ENCODE measurements at regions of chr2 and their contacts with region 1.

Region 1: GRCh38 chr2:216519154-216519762 is 20.6 kb downstream of the RPL37A start:
- DNase-seq: peak; percentile 64
- H3K4me3 ChIP-seq: no peak overlapping the region; a peak in 1 of 4 replicates
- H3K27ac ChIP-seq: no peak overlapping the region
- H3K4me1 ChIP-seq: peaks cover 0 to 5% of the 10 kb centered on the region in 2 experiments; a peak in 2 of 4 replicates
- H3K27me3 ChIP-seq: no peaks in the 10 kb centered on the region
- CTCF ChIP-seq: peak; percentile 85
- EP300 ChIP-seq: no peak
- RAD21 ChIP-seq: peak; percentile 91

Region 2: DNA sequence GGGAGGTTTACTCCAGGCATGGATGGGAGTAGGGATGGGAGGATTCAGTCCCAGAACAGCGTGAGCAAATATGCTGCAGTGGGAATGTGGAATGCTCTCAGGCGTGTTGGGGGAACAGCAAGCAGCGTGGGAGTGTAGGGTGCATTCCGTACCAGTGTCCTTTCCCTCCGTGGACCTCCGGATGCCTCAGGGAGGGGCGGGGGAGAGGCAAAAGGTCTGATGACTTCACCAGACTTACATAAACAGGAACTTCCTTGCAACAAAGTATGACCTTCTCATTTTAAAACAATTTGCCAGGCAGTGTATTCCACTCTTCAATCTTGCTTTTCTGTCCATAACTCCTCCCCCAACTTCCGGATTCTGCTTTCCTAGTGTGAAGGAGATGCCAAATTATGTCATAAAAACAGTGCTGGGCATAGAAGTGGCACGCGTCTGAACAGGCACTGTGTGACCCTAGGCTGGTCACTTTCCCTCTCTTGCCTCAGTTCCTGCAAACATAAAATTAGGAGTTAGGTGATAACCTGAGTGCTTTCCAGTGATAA is 16.3 kb after region 1 on chr2:
- CTCF ChIA-PET with region 1: interaction called, 65 read pairs
- POLR2A ChIA-PET with region 1: interaction called, 4 read pairs
- DNase-seq: no peak
- H3K4me3 ChIP-seq: no peak overlapping the region
- H3K27ac ChIP-seq: peak overlapping the region; percentile 77 to 89
- H3K4me1 ChIP-seq: peaks cover 40 to 41% of the 10 kb centered on the region in 2 experiments
- H3K27me3 ChIP-seq: no peaks in the 10 kb centered on the region
- CTCF ChIP-seq: no peak
- EP300 ChIP-seq: peak in 1 of 2 experiments; percentile 50; a peak in 1 of 4 replicates
- RAD21 ChIP-seq: no peak

Region 3: DNA sequence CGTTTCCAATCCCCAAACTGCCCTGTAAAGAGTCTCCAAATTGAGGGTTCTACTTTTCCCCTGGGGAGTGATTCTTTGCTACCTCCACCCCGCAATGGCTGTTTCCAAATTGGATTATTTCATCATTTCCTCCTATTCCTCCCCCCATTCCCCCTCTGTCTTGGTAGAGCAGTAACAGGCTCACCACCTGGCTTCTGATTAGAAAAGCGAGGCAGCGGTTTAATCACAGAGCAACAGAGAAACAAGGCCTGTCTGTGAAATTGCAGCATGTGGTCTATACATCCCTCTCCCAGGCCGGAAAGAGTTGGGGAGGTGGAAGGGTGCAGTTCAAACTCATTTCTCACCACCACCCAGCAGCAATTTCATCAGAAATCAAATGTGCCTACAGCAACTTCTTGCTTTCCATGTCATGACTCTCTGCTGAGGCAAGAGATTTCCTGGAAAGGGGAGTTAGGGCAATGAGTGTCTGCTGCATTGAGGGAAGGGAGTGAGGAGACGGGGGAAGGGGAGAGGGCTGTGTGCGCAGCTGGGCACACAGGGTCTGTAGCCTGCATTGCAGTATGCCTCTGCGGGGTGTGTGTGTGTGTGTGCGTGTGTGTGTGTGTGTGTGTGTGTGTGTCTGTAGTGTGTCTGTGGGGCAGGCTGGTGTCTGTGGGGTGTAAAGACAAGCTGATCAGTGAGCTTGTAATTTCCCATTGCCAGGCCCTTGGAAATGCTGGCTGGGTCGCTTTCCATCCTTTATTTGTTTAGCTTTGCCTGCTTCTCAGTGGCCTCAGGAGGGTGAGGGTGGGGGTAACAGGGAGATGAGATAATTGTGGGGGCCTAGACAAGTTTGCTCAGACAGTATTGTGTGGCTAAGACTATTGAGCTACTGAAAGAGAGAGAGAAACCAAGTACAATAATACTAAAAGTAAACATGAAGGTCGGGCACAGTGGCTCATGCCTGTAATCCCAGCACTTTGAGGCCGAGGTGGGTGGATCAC is 100.4 kb after region 1 on chr2:
- CTCF ChIA-PET with region 1: interaction called, 62 read pairs
- POLR2A ChIA-PET with region 1: interaction called, 6 read pairs
- DNase-seq: peak; percentile 74
- H3K4me3 ChIP-seq: no peak overlapping the region
- H3K27ac ChIP-seq: peak overlapping the region in 1 of 2 experiments; percentile 90; a peak in 2 of 4 replicates
- H3K4me1 ChIP-seq: peaks cover 19 to 38% of the 10 kb centered on the region in 2 experiments; a peak in 3 of 4 replicates
- H3K27me3 ChIP-seq: no peaks in the 10 kb centered on the region
- CTCF ChIP-seq: no peak
- EP300 ChIP-seq: peak in 1 of 2 experiments; percentile 76; a peak in 2 of 4 replicates
- RAD21 ChIP-seq: peak; percentile 22; the same call in 1 of the 2 replicates

Region 4: DNA sequence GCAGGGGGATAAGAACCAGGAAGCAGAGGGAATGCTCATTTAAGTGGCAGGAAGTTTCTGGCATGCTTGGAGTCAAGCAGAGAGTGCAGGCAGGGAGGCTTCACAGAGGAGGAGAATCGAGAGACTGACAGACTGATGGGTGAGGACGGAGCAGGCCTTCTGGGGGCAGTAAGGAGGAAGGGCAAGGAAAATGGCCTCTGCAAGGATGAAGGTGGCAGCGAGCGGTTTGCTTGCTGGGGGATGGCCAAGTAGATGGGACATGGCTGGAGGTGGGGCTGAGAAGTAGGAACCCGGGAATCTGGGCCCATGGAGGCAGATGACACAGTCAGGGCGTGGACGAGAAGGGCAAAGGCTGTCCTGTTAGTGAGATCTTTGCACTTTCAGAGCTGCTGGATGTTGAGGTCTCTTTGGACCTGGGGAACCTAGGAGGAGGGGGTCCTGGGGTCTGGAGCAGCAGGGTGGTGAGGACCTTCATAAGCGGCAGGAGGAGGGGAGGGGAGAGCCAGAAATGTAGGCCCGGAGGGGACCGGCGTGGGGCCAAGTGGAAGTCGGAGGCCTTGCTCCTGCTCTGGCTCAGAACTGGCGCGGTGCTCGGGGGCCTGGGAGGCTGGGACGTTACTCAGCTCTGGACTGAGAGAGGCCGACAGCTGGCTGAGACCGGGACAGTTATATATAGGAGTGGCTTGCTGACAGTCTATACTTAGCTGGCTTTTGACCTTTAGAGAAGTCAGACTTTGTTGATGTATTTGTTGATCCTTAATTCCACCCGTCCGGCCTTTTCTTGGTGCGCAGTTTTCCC is 160.2 kb after region 1 on chr2:
- CTCF ChIA-PET with region 1: interaction called, 17 read pairs
- POLR2A ChIA-PET with region 1: no interaction called
- DNase-seq: no peak
- H3K4me3 ChIP-seq: no peak overlapping the region
- H3K27ac ChIP-seq: no peak overlapping the region
- H3K4me1 ChIP-seq: peaks cover 6 to 8% of the 10 kb centered on the region in 2 experiments; a peak in 2 of 4 replicates
- H3K27me3 ChIP-seq: no peaks in the 10 kb centered on the region
- CTCF ChIP-seq: no peak
- EP300 ChIP-seq: no peak
- RAD21 ChIP-seq: no peak

Region 5: DNA sequence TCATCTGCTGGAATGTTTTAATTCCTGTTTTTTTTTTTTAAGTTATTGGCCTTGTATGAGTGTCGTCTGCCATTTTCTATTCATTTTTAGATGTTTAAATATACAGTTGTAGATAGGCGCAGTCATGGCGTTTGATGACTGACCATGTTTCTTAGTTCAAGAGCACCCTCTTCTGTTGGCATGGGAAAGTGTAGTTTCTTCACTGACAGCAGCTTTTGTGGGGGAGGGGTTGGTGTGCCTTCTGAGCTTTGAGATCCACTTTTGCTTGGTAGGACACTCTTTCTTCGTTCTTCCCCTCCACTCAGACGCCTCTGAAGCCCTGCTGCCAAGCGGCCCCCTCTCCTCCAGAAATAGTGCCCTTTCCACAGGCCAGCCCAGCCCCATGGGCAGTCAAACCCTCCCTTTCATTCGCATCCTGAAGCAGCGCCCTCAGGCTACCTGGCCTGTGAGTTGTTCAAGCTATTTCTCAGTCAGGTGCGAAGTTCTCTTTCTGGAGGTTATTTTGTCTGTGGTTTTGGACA is 991.6 kb after region 1 on chr2:
- CTCF ChIA-PET with region 1: interaction called, 11 read pairs
- POLR2A ChIA-PET with region 1: no interaction called
- DNase-seq: peak; percentile 78
- H3K4me3 ChIP-seq: no peak overlapping the region; a peak in 1 of 4 replicates
- H3K27ac ChIP-seq: peak overlapping the region in 1 of 2 experiments; percentile 48; a peak in 1 of 4 replicates
- H3K4me1 ChIP-seq: peaks cover 8 to 11% of the 10 kb centered on the region in 2 experiments; a peak in 3 of 4 replicates
- H3K27me3 ChIP-seq: no peaks in the 10 kb centered on the region
- CTCF ChIP-seq: peak; percentile 77
- EP300 ChIP-seq: no peak
- RAD21 ChIP-seq: peak; percentile 99

Measured in SK-N-SH (cell line).